Heart left ventricle (tissue), 16 donors: ENCODE measurements at regions of chr20 and their contacts with region 1.

Region 1: GRCh38 chr20:38883081-38883980 is 42.9 kb upstream of the FAM83D start:
- DNase-seq: peak in 2 of 5 donors; percentile 31 to 52
- ATAC-seq: peak in 3 of 4 donors; percentile 21 to 52 (median 36)
- H3K4me3 ChIP-seq: no peak overlapping the region
- H3K27ac ChIP-seq: no peak overlapping the region
- H3K4me1 ChIP-seq: peaks cover 0 to 30% (median 9%) of the 10 kb centered on the region in 12 donors
- H3K27me3 ChIP-seq: peaks cover 0 to 40% (median 0%) of the 10 kb centered on the region in 9 donors
- CTCF ChIP-seq: no peak
- POLR2A ChIP-seq: no peak

Region 2: GRCh38 chr20:38805502-38805957 is 77.8 kb before region 1 on chr20 and contains the start of gene PPP1R16B:
- intact Hi-C with region 1: loop called in 4 of 10 experiments (anchors 5 to 10 kb)
- DNase-seq: peak; percentile 62 to 85 (median 70)
- ATAC-seq: peak; percentile 78 to 91 (median 86)
- H3K4me3 ChIP-seq: peak within 1 kb of the TSS; percentile 68 to 98 (median 76)
- H3K27ac ChIP-seq: peak within 1 kb of the TSS; percentile 69 to 90 (median 86)
- H3K4me1 ChIP-seq: peaks cover 0 to 55% (median 31%) of the 10 kb centered on the region in 12 donors
- H3K27me3 ChIP-seq: peaks cover 3 to 33% (median 17%) of the 10 kb centered on the region in 9 donors
- CTCF ChIP-seq: no peak
- POLR2A ChIP-seq: peak in 1 of 2 donors; percentile 59
- total RNA-seq, gene PPP1R16B: 3.4 to 11.8 (median 6.9) TPM

Region 3: GRCh38 chr20:38997622-38998021 is 114.3 kb after region 1 on chr20:
- intact Hi-C with region 1: no loop called
- DNase-seq: no peak
- ATAC-seq: no peak
- H3K4me3 ChIP-seq: no peak overlapping the region
- H3K27ac ChIP-seq: no peak overlapping the region
- H3K4me1 ChIP-seq: no peaks in the 10 kb centered on the region
- H3K27me3 ChIP-seq: no peaks in the 10 kb centered on the region
- CTCF ChIP-seq: no peak
- POLR2A ChIP-seq: no peak